SK-N-SH (cell line): ENCODE measurements at regions of chr7 and their contacts with region 1.

Region 1: GRCh38 chr7:155344600-155345433 is 47.1 kb downstream of the INSIG1 start:
- DNase-seq: peak; percentile 99
- H3K4me3 ChIP-seq: peak overlapping the region; percentile 49 to 51; a peak in 3 of 4 replicates
- H3K27ac ChIP-seq: no peak overlapping the region
- H3K4me1 ChIP-seq: peaks cover 0 to 3% of the 10 kb centered on the region in 2 experiments; a peak in 1 of 4 replicates
- H3K27me3 ChIP-seq: peaks cover 25% of the 10 kb centered on the region
- CTCF ChIP-seq: peak; percentile 93
- EP300 ChIP-seq: no peak
- RAD21 ChIP-seq: peak; percentile 83

Region 2: GRCh38 chr7:154919344-154920225 is 425.2 kb before region 1 on chr7:
- CTCF ChIA-PET with region 1: interaction called, 29 read pairs
- POLR2A ChIA-PET with region 1: no interaction called
- DNase-seq: no peak
- H3K4me3 ChIP-seq: no peak overlapping the region
- H3K27ac ChIP-seq: no peak overlapping the region
- H3K4me1 ChIP-seq: no peaks in the 10 kb centered on the region
- H3K27me3 ChIP-seq: no peaks in the 10 kb centered on the region
- CTCF ChIP-seq: no peak
- EP300 ChIP-seq: no peak
- RAD21 ChIP-seq: no peak

Region 3: GRCh38 chr7:155173905-155174304 is 170.9 kb before region 1 on chr7:
- CTCF ChIA-PET with region 1: interaction called, 13 read pairs
- POLR2A ChIA-PET with region 1: no interaction called
- DNase-seq: no peak
- H3K4me3 ChIP-seq: no peak overlapping the region
- H3K27ac ChIP-seq: no peak overlapping the region
- H3K4me1 ChIP-seq: no peaks in the 10 kb centered on the region
- H3K27me3 ChIP-seq: peaks cover 11% of the 10 kb centered on the region
- CTCF ChIP-seq: no peak
- EP300 ChIP-seq: no peak
- RAD21 ChIP-seq: no peak

Region 4: GRCh38 chr7:155213955-155214740 is 130.7 kb before region 1 on chr7:
- CTCF ChIA-PET with region 1: interaction called, 31 read pairs
- POLR2A ChIA-PET with region 1: no interaction called
- DNase-seq: no peak
- H3K4me3 ChIP-seq: no peak overlapping the region
- H3K27ac ChIP-seq: no peak overlapping the region; a peak in 1 of 4 replicates
- H3K4me1 ChIP-seq: peaks cover 0 to 13% of the 10 kb centered on the region in 2 experiments; a peak in 1 of 4 replicates
- H3K27me3 ChIP-seq: no peaks in the 10 kb centered on the region
- CTCF ChIP-seq: no peak
- EP300 ChIP-seq: no peak
- RAD21 ChIP-seq: no peak

Region 5: GRCh38 chr7:155257482-155258225 is 87.2 kb before region 1 on chr7:
- CTCF ChIA-PET with region 1: interaction called, 18 read pairs
- POLR2A ChIA-PET with region 1: no interaction called
- DNase-seq: peak; percentile 86
- H3K4me3 ChIP-seq: no peak overlapping the region
- H3K27ac ChIP-seq: peak overlapping the region in 1 of 2 experiments; percentile 99; a peak in 2 of 4 replicates
- H3K4me1 ChIP-seq: peaks cover 5 to 47% of the 10 kb centered on the region in 2 experiments; a peak in 3 of 4 replicates
- H3K27me3 ChIP-seq: peaks cover 5% of the 10 kb centered on the region; the same call in 1 of the 2 replicates
- CTCF ChIP-seq: no peak
- EP300 ChIP-seq: no peak; a peak in 2 of 4 replicates
- RAD21 ChIP-seq: no peak

Region 6: DNA sequence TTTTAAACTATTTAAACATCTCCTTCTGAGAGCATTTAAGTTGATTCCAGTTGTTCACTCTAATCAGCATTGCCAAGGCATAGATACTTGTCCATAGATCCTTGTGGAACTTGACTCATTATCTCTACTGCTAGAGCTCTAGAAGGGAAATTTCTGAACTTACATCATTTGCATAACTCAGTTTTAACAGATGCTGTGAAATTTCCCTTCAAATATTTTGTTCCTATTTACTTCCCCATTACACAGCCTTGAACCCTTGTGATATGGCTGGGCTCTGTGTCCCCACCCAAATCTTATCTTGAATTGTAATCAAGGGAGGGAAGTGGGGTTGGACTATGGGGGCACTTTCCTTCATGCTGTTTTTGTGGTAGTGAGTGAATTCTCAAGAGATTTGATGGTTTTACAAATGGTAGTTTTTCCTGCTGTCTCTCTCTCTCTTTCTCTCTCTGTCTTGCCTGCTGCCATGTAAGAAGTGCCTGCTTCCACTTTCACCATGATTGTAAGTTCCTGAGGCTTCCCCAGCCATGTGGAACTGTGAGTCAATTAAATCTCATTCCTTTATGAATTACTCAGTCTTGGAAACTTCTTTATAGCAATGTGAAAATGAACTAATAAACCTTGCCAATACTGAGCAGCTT is 21.7 kb before region 1 on chr7:
- CTCF ChIA-PET with region 1: interaction called, 43 read pairs
- POLR2A ChIA-PET with region 1: no interaction called
- DNase-seq: no peak
- H3K4me3 ChIP-seq: no peak overlapping the region
- H3K27ac ChIP-seq: no peak overlapping the region
- H3K4me1 ChIP-seq: peaks cover 0 to 5% of the 10 kb centered on the region in 2 experiments; a peak in 1 of 4 replicates
- H3K27me3 ChIP-seq: no peaks in the 10 kb centered on the region
- CTCF ChIP-seq: no peak
- EP300 ChIP-seq: no peak
- RAD21 ChIP-seq: no peak

Region 7: DNA sequence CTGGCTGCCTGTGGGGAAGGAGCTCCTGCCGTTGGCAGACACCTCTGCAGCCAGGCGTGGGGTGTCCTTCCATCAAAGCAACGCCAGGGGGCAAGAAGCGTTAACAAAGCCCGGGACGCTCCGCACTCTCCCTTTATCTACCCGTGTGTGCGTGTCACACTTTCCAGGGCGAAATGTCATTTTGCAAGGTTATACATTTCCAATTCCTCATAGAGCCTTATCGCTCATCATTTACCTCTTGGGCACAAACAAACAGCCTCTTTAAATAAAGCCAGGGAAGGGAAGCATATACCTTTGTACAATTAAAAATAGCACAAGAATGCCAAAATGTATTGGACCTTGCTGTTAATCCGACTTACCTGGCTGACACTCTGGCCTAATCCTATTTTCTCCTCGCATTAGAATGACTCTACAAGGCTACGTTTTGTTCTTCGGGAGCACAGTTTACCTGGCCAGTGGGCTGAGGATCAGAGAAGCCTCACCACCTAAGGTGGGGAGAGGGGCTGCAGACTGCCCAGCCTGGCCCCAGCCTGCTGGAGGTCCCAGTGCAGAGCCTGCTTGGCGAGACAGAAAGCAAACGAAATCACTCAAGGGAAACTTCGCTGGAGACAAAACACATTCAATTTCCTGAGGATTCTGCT is 35.5 kb after region 1 on chr7:
- CTCF ChIA-PET with region 1: interaction called, 15 read pairs
- POLR2A ChIA-PET with region 1: no interaction called
- DNase-seq: peak; percentile 95
- H3K4me3 ChIP-seq: no peak overlapping the region
- H3K27ac ChIP-seq: no peak overlapping the region
- H3K4me1 ChIP-seq: peaks cover 3 to 4% of the 10 kb centered on the region in 2 experiments; a peak in 1 of 4 replicates
- H3K27me3 ChIP-seq: peaks cover 100% of the 10 kb centered on the region
- CTCF ChIP-seq: peak; percentile 84
- EP300 ChIP-seq: no peak
- RAD21 ChIP-seq: peak; percentile 70

Region 8: GRCh38 chr7:155660059-155660757 is 315.4 kb after region 1 on chr7:
- CTCF ChIA-PET with region 1: no interaction called
- POLR2A ChIA-PET with region 1: no interaction called
- DNase-seq: no peak
- H3K4me3 ChIP-seq: no peak overlapping the region
- H3K27ac ChIP-seq: no peak overlapping the region
- H3K4me1 ChIP-seq: peaks cover 3% of the 10 kb centered on the region in 2 experiments; a peak in 3 of 4 replicates
- H3K27me3 ChIP-seq: no peaks in the 10 kb centered on the region
- CTCF ChIP-seq: no peak
- EP300 ChIP-seq: no peak
- RAD21 ChIP-seq: no peak